ENCODE measurements at regions of chr18 and their contacts with region 1.

Region 1: DNA sequence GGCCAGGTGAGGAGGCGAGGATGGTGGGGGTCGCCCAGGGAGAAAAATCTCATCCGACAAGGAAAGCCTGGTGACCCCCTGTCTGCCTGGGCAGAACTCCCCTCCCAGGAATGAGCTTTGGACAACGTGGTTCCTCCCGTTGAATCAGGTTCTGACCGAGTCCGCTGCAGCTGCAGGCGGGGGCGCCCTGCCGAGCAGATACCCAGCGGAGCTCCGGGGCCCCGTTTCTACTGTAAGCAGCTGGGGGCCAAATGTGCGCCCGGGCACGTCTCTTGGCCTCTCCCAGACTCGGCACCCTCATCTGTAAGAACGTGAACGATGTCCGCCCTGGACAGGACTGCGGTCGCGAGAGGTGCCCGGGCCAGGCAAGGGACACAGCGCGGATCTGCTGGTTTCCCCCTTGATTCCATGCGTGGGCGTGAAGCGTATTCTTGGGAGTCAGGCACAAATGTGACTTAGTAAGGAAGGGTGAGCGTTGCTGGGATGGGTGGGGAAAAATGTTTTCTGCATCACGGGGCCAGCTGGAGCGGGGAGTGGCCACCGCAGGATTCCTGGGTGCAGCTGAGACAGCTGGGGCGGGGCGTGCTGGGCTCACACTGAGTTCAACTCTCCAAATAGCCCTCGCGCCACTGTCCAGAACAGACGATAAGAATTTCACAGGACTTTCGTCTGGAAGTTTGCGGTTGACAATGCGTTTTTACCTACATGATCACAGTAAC is 20.2 kb upstream of the TUBB6 start:
- DNase-seq: peak in 1 of 2 experiments; percentile 85
- H3K4me3 ChIP-seq: peak overlapping the region; percentile 31 to 63 (median 54)
- H3K27ac ChIP-seq: no peak overlapping the region
- H3K4me1 ChIP-seq: peaks cover 0 to 10% (median 6%) of the 10 kb centered on the region in 4 experiments; a peak in 5 of 7 replicates
- H3K27me3 ChIP-seq: peaks cover 2 to 29% (median 20%) of the 10 kb centered on the region in 4 experiments; a peak in 6 of 7 replicates
- CTCF ChIP-seq: no peak
- EP300 ChIP-seq: no peak
- POLR2A ChIP-seq: no peak
- RAD21 ChIP-seq: no peak

Region 2: GRCh38 chr18:12271376-12272235 is 16.2 kb before region 1 on chr18:
- CTCF ChIA-PET with region 1: interaction called, 21 read pairs
- POLR2A ChIA-PET with region 1: interaction called, 3 read pairs
- DNase-seq: peak in 1 of 2 experiments; percentile 89
- H3K4me3 ChIP-seq: peak overlapping the region; percentile 40 to 67 (median 52); a peak in 6 of 8 replicates
- H3K27ac ChIP-seq: no peak overlapping the region
- H3K4me1 ChIP-seq: no peaks in the 10 kb centered on the region; a peak in 1 of 7 replicates
- H3K27me3 ChIP-seq: no peaks in the 10 kb centered on the region
- CTCF ChIP-seq: peak in 2 of 3 experiments; percentile 40 to 83; a peak in 3 of 4 replicates
- EP300 ChIP-seq: no peak
- POLR2A ChIP-seq: no peak; a peak in 2 of 3 replicates
- RAD21 ChIP-seq: peak; percentile 17 to 23; a peak in 2 of 4 replicates

Region 3: GRCh38 chr18:12308386-12309100 is 20.7 kb after region 1 on chr18:
- CTCF ChIA-PET with region 1: interaction called, 17 read pairs
- POLR2A ChIA-PET with region 1: interaction called, 49 read pairs
- DNase-seq: peak in 1 of 2 experiments; percentile 77
- H3K4me3 ChIP-seq: peak overlapping the region; percentile 63 to 81 (median 70)
- H3K27ac ChIP-seq: no peak overlapping the region; the same call in 1 of the 2 replicates
- H3K4me1 ChIP-seq: peaks cover 0 to 16% (median 12%) of the 10 kb centered on the region in 4 experiments; a peak in 6 of 7 replicates
- H3K27me3 ChIP-seq: peaks cover 0 to 29% (median 20%) of the 10 kb centered on the region in 4 experiments; a peak in 5 of 7 replicates
- CTCF ChIP-seq: no peak
- EP300 ChIP-seq: no peak
- POLR2A ChIP-seq: no peak; a peak in 1 of 3 replicates
- RAD21 ChIP-seq: no peak

Region 4: GRCh38 chr18:12317664-12318333 is 30.0 kb after region 1 on chr18:
- CTCF ChIA-PET with region 1: interaction called, 18 read pairs
- POLR2A ChIA-PET with region 1: interaction called, 3 read pairs
- DNase-seq: no peak
- H3K4me3 ChIP-seq: no peak overlapping the region
- H3K27ac ChIP-seq: no peak overlapping the region
- H3K4me1 ChIP-seq: no peaks in the 10 kb centered on the region
- H3K27me3 ChIP-seq: no peaks in the 10 kb centered on the region
- CTCF ChIP-seq: no peak
- EP300 ChIP-seq: no peak
- POLR2A ChIP-seq: no peak
- RAD21 ChIP-seq: no peak

Region 5: GRCh38 chr18:12408247-12408869 is 120.5 kb after region 1 on chr18:
- CTCF ChIA-PET with region 1: no interaction called
- POLR2A ChIA-PET with region 1: no interaction called
- DNase-seq: no peak
- H3K4me3 ChIP-seq: peak overlapping the region; percentile 44 to 75 (median 56)
- H3K27ac ChIP-seq: no peak overlapping the region
- H3K4me1 ChIP-seq: peaks cover 0 to 8% (median 2%) of the 10 kb centered on the region in 4 experiments; a peak in 5 of 7 replicates
- H3K27me3 ChIP-seq: peaks cover 0 to 18% (median 15%) of the 10 kb centered on the region in 4 experiments; a peak in 6 of 7 replicates
- CTCF ChIP-seq: no peak
- EP300 ChIP-seq: no peak
- POLR2A ChIP-seq: no peak
- RAD21 ChIP-seq: no peak